HEK293T (cell line): ENCODE measurements at regions of chr1 and their contacts with region 1.

Region 1: GRCh38 chr1:224447251-224447650 is 12.7 kb upstream of the WDR26 start:
- DNase-seq: no peak

Region 2: DNA sequence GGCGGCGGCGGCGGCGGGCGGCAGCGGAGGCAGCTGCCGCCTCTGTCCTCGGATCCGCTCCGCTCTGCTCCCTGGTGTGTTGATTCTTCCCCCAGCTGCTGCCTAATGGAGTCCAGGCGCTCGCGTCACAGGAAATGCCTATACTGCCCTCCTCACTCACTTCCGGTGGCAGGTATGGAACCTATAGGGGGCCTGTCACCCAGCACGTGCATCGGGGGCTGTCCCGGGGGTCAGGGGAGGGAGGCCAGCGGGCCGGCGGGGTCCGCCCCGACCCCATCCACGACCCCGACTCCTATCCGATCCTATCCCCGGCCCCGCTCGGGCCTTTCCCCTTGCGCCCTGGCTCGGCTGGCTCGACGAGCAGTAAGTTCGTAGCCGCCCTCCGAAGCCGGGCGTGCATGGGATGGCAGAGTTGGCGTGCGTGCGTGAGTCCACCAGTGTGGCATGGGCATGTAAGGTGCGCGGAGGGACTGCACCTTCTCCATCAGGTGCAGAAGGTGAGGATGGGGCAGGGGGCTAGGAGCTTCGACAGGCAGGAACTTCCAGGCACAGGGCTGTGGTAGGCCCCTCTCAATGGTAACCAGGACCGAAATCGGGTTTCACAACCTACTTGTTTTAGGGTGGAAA is 12.4 kb before region 1 on chr1 and contains the start of gene WDR26:
- CTCF ChIA-PET with region 1: interaction called, 4 read pairs
- POLR2A ChIA-PET with region 1: interaction called, 12 read pairs
- DNase-seq: peak; percentile 96

Region 3: GRCh38 chr1:224457782-224458144 is 10.5 kb after region 1 on chr1:
- CTCF ChIA-PET with region 1: interaction called, 10 read pairs
- POLR2A ChIA-PET with region 1: no interaction called
- DNase-seq: no peak

Region 4: GRCh38 chr1:224472806-224473205 is 25.6 kb after region 1 on chr1:
- CTCF ChIA-PET with region 1: no interaction called
- POLR2A ChIA-PET with region 1: no interaction called
- DNase-seq: no peak